ENCODE measurements at regions of chr14 and their contacts with region 1.

Region 1: GRCh38 chr14:52552063-52552988 is at the starts of genes GPR137C and TXNDC16:
- DNase-seq: peak; percentile 99 to 100
- H3K4me3 ChIP-seq: peak within 1 kb of the TSS; percentile 82 to 93
- H3K27ac ChIP-seq: peak within 1 kb of the TSS; percentile 80 to 93
- H3K4me1 ChIP-seq: peaks cover 0 to 13% of the 10 kb centered on the region in 2 donors
- H3K27me3 ChIP-seq: no peaks in the 10 kb centered on the region
- CTCF ChIP-seq: no peak
- total RNA-seq, gene GPR137C: not detected
- total RNA-seq, gene TXNDC16: 1.8 TPM

Region 2: DNA sequence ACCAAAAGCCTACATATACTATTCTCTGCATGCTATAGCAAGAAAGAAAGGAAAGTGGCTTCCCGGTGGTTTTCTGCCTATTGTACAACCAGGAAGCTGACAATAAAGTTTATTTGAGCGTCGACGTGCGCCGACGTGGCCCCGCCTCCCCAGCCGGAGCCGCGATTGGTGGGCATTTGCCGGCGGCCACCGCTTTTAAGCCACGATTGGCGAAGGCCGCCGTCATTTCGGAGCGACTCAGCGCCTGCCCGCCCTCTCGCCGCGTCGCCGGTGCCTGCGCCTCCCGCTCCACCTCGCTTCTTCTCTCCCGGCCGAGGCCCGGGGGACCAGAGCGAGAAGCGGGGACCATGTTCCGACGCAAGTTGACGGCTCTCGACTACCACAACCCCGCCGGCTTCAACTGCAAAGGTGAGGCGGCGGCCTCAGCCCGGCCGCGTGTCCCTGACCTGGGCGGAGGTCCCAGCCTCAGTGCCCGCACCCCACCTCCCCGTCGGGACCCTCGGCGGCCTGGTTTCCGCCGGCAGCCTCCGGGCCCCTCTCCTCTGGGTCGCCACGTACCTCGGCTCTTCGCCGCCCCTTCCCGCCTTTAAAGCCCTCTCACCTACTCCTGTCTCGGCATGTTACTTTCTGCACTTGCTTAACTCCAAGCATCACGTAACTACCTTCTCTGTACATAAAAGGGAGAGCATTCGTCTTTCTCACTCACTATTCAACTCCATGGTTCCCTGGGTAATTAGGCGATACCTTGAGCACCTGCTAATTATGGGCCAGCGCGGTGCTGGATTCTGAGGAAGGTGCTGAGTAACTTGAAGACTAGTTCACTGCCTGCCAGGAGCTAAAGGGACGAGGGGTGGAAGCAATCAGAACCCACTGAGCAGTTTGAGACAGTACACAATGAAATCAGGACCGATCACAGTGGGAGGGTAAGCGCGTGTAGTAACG is 562.8 kb before region 1 on chr14 and contains the start of gene RTRAF:
- intact Hi-C with region 1: loop called (anchors 5 kb)
- DNase-seq: peak; percentile 59 to 96
- H3K4me3 ChIP-seq: peak within 1 kb of the TSS; percentile 89 to 94
- H3K27ac ChIP-seq: peak within 1 kb of the TSS; percentile 86 to 94
- H3K4me1 ChIP-seq: peaks cover 0 to 3% of the 10 kb centered on the region in 2 donors
- H3K27me3 ChIP-seq: no peaks in the 10 kb centered on the region
- CTCF ChIP-seq: no peak
- total RNA-seq, gene RTRAF: 15.3 TPM

Region 3: DNA sequence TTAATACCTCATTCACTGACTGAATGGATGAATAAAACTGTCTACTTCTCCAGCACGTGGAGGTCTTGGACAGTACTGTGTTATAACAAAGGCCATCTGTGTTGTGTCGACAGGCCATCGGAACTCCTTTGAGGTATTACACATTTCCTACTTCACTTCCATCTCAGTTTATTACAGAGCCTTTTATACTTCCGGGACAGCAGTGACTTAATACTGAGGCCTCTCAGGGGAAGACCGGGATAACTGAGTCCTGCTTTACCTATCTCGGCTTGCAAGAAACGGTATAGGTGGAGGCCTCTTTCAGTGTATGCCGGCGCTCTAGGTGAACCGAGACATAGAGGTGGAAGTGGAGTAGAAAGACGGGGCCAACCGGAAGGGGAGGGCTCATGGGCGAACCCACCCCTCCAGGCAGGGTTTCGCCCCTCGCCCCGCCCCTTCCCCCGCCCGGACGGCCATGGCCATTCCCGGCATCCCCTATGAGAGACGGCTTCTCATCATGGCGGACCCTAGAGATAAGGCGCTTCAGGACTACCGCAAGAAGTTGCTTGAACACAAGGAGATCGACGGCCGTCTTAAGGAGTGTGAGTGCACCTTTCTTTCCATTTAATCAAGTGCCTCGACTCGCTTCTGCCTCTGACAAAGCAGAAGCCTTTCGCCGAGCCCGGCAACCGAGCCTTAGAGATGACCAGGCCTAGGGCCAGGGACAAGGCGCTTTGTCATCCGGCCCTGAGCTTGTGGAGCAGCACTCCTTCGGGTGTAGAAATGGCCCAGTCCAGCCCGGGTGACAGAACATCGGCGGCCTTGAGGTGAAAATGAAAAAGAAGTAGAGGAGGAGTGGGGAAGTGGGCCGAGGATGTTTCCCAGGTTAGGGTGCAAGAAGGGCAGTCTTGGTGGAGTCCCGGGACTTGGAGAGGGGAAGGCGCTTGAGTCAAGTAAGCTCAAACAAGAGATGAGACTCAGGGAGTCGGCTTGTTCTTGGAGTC is 154.7 kb after region 1 on chr14 and contains the start of gene PSMC6:
- intact Hi-C with region 1: loop called (anchors 2 kb)
- DNase-seq: peak; percentile 80 to 96
- H3K4me3 ChIP-seq: peak within 1 kb of the TSS; percentile 78 to 96
- H3K27ac ChIP-seq: peak within 1 kb of the TSS; percentile 89
- H3K4me1 ChIP-seq: peaks cover 7 to 15% of the 10 kb centered on the region in 2 donors
- H3K27me3 ChIP-seq: no peaks in the 10 kb centered on the region
- CTCF ChIP-seq: no peak
- total RNA-seq, gene PSMC6: 19.3 TPM

Region 4: GRCh38 chr14:52791203-52792096 is 239.1 kb after region 1 on chr14 and contains the start of gene GNPNAT1:
- intact Hi-C with region 1: loop called (anchors 2 kb)
- DNase-seq: peak; percentile 42 to 92
- H3K4me3 ChIP-seq: peak within 1 kb of the TSS; percentile 83 to 91
- H3K27ac ChIP-seq: peak within 1 kb of the TSS; percentile 94 to 95
- H3K4me1 ChIP-seq: peaks cover 6 to 21% of the 10 kb centered on the region in 2 donors
- H3K27me3 ChIP-seq: no peaks in the 10 kb centered on the region
- CTCF ChIP-seq: no peak
- total RNA-seq, gene GNPNAT1: 39.9 TPM

Region 5: GRCh38 chr14:53152890-53153701 is 600.8 kb after region 1 on chr14 and contains the start of gene DDHD1:
- intact Hi-C with region 1: loop called (anchors 2 kb)
- DNase-seq: peak; percentile 27 to 87
- H3K4me3 ChIP-seq: peak within 1 kb of the TSS; percentile 71 to 96
- H3K27ac ChIP-seq: peak within 1 kb of the TSS; percentile 87 to 96
- H3K4me1 ChIP-seq: peaks cover 0 to 11% of the 10 kb centered on the region in 2 donors
- H3K27me3 ChIP-seq: no peaks in the 10 kb centered on the region
- CTCF ChIP-seq: no peak
- total RNA-seq, gene DDHD1: 21.3 TPM